GM10248 (cell line): ENCODE measurements at regions of chr18 and their contacts with region 1.

Region 1: GRCh38 chr18:36158261-36158867 is 28.7 kb downstream of the ELP2 start:
- DNase-seq: no peak
- CTCF ChIP-seq: no peak

Region 2: GRCh38 chr18:36139250-36139649 is 19.1 kb before region 1 on chr18:
- CTCF ChIA-PET with region 1: interaction called, 15 read pairs
- POLR2A ChIA-PET with region 1: no interaction called
- DNase-seq: no peak
- CTCF ChIP-seq: no peak